ENCODE measurements at regions of chr17 and their contacts with region 1.

Region 1: GRCh38 chr17:31373150-31374093 is 18.1 kb upstream of the RAB11FIP4 start:
- DNase-seq: peak in 7 of 9 donors; percentile 51 to 73 (median 65)
- ATAC-seq: peak; percentile 90
- H3K4me3 ChIP-seq: no peak overlapping the region
- H3K4me3 Mint-ChIP-seq: no peak overlapping the region
- H3K27ac ChIP-seq: no peak overlapping the region
- H3K27ac Mint-ChIP-seq: peak overlapping the region in 3 of 9 donors; percentile 10 to 28 (median 26)
- H3K4me1 ChIP-seq: peaks cover 0 to 4% of the 10 kb centered on the region in 2 donors
- H3K4me1 Mint-ChIP-seq: peaks cover 17 to 30% (median 27%) of the 10 kb centered on the region in 7 donors
- H3K27me3 ChIP-seq: no peaks in the 10 kb centered on the region
- H3K27me3 Mint-ChIP-seq: no peaks in the 10 kb centered on the region

Region 2: DNA sequence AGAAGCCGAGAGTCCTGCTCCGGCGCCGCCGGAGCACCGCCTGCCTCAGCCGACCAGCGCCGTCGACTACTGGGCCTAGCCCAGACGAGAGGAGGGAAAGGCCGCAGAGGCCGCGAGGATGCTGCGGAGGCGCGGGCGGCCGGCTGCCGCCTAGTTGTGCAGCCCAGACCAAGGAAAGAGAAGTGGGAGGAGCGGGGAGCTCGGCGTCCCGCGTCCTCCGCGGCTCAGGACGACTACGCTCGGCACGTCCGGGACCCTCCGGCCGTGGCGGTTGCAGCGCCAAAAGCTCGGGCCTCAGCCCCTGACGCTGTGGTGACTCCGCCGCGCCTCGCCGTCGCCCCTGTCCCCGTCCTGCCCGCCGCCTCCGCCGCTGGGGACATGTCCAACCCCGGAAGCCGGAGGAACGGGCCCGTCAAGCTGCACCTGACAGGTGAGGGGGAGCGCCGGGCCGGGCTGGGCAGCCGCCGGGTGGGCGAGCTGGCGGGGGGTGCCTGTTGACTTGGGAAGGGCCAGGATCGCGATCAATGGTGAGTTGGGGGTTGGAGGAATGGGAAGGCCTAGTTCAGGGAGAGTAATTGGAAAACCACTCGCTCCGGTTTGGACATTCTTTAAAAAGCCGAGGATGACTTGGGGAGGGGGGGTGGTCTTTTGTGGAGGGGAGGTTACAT is 364.9 kb before region 1 on chr17:
- CTCF ChIA-PET with region 1: interaction called, 5 read pairs
- POLR2A ChIA-PET with region 1: no interaction called
- intact Hi-C with region 1: loop called in 1 of 2 experiments (anchors 1 kb)
- DNase-seq: peak; percentile 16 to 60 (median 40)
- ATAC-seq: peak; percentile 77
- H3K4me3 ChIP-seq: peak overlapping the region; percentile 75
- H3K4me3 Mint-ChIP-seq: peak overlapping the region; percentile 86 to 97 (median 92)
- H3K27ac ChIP-seq: peak overlapping the region; percentile 61
- H3K27ac Mint-ChIP-seq: peak overlapping the region; percentile 21 to 94 (median 88)
- H3K4me1 ChIP-seq: peaks cover 0 to 9% of the 10 kb centered on the region in 2 donors
- H3K4me1 Mint-ChIP-seq: peaks cover 8 to 23% (median 18%) of the 10 kb centered on the region in 7 donors
- H3K27me3 ChIP-seq: no peaks in the 10 kb centered on the region
- H3K27me3 Mint-ChIP-seq: peaks cover 0 to 31% (median 0%) of the 10 kb centered on the region in 5 donors

Region 3: DNA sequence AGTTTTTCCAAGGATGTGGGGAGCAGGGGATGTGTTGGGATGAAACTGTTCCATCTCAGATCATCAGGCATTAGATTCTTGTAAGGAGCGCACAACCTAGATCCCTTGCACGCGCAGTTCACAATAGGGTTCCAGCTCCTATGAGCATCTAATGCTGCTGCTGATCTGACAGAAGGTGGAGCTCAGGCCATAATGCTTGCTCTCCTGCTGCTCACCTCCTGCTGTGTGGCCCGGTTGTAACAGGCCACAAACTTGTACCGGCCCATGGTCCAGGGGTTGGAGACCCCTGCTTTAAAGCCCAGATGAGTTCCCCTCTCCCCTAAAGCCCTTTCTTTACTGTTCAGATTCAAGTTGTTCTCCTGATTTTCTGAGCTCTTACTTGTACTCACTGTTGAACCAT is 357.8 kb before region 1 on chr17:
- CTCF ChIA-PET with region 1: interaction called, 5 read pairs
- POLR2A ChIA-PET with region 1: no interaction called
- intact Hi-C with region 1: loop called (anchors 1 to 2 kb)
- DNase-seq: no peak
- ATAC-seq: no peak
- H3K4me3 ChIP-seq: no peak overlapping the region
- H3K4me3 Mint-ChIP-seq: no peak overlapping the region
- H3K27ac ChIP-seq: no peak overlapping the region
- H3K27ac Mint-ChIP-seq: no peak overlapping the region
- H3K4me1 ChIP-seq: no peaks in the 10 kb centered on the region
- H3K4me1 Mint-ChIP-seq: peaks cover 0 to 5% (median 0%) of the 10 kb centered on the region in 7 donors
- H3K27me3 ChIP-seq: no peaks in the 10 kb centered on the region
- H3K27me3 Mint-ChIP-seq: peaks cover 0 to 16% (median 0%) of the 10 kb centered on the region in 5 donors

Region 4: DNA sequence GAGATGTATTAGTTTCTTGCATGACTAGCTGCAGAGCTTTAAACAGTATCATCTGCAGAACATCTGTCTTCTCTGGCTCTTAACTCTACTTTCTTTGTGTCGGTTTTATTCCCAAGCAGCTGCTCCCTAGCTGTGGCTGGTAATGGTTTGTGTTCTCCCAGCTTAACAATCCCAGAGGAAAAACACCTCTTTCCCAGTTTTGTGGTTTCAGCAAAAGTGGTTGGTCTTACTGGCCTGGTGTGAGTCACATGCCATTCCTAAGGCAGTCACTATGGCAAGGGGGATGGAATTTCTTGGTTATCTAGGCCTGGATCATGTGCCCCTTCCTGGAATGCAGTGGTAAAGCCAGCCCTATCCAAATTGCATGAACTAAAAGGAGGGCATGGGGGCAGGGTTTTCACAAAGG is 103.8 kb before region 1 on chr17:
- CTCF ChIA-PET with region 1: interaction called, 16 read pairs
- POLR2A ChIA-PET with region 1: interaction called, 6 read pairs
- intact Hi-C with region 1: loop called (anchors 1 kb)
- DNase-seq: no peak
- ATAC-seq: no peak
- H3K4me3 ChIP-seq: no peak overlapping the region
- H3K4me3 Mint-ChIP-seq: no peak overlapping the region
- H3K27ac ChIP-seq: no peak overlapping the region
- H3K27ac Mint-ChIP-seq: no peak overlapping the region
- H3K4me1 ChIP-seq: no peaks in the 10 kb centered on the region
- H3K4me1 Mint-ChIP-seq: peaks cover 0 to 9% (median 5%) of the 10 kb centered on the region in 7 donors
- H3K27me3 ChIP-seq: no peaks in the 10 kb centered on the region
- H3K27me3 Mint-ChIP-seq: no peaks in the 10 kb centered on the region

Region 5: DNA sequence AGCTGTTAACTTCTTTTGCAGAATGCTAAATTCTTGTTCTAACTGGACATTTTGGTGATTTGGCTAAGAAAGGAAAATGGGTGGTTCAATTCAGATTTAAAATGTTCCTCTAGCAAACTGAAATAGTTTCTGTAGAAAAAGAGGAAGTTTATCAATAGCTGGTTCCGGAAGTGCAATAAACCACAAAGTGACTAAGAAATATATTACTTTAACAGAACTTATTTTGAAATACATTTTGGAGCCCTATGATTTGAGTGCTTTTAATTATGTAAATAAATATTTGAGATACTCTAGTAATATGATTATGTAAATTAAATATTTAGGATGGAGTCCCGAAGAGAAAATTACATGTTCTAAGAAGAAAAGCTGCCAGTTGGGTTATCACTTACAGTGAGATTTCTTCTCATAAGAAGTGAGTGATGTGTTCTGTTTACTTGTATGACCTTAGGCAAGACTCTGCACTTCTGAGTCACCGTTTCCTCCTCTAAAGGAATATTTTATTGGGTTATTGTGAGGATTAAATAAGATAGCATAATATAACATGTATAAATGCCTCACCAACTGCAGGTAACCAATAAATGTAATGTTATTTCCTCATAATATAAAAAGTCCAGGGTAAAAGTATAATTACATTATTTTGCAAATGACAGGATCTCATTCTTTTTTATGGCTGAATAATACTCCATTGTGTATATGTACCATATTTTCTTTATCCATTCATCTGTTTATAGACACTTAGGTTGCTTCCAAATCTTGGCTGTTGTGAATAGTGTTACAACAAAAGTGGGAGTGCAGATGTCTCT is 59.2 kb before region 1 on chr17 and contains the start of gene EVI2B:
- CTCF ChIA-PET with region 1: interaction called, 12 read pairs
- POLR2A ChIA-PET with region 1: interaction called, 10 read pairs
- intact Hi-C with region 1: loop called (anchors 1 to 5 kb)
- DNase-seq: peak in 7 of 9 donors; percentile 51 to 73 (median 69)
- ATAC-seq: peak; percentile 46
- H3K4me3 ChIP-seq: peak within 1 kb of the TSS; percentile 63
- H3K4me3 Mint-ChIP-seq: peak within 1 kb of the TSS; percentile 85 to 98 (median 92)
- H3K27ac ChIP-seq: peak within 1 kb of the TSS; percentile 82
- H3K27ac Mint-ChIP-seq: peak within 1 kb of the TSS; percentile 84 to 98 (median 95)
- H3K4me1 ChIP-seq: peaks cover 27 to 41% of the 10 kb centered on the region in 2 donors
- H3K4me1 Mint-ChIP-seq: peaks cover 31 to 52% (median 44%) of the 10 kb centered on the region in 7 donors
- H3K27me3 ChIP-seq: no peaks in the 10 kb centered on the region
- H3K27me3 Mint-ChIP-seq: peaks cover 0 to 2% (median 0%) of the 10 kb centered on the region in 5 donors
- total RNA-seq, gene EVI2B: 57.8 to 154 (median 134) TPM

Region 6: DNA sequence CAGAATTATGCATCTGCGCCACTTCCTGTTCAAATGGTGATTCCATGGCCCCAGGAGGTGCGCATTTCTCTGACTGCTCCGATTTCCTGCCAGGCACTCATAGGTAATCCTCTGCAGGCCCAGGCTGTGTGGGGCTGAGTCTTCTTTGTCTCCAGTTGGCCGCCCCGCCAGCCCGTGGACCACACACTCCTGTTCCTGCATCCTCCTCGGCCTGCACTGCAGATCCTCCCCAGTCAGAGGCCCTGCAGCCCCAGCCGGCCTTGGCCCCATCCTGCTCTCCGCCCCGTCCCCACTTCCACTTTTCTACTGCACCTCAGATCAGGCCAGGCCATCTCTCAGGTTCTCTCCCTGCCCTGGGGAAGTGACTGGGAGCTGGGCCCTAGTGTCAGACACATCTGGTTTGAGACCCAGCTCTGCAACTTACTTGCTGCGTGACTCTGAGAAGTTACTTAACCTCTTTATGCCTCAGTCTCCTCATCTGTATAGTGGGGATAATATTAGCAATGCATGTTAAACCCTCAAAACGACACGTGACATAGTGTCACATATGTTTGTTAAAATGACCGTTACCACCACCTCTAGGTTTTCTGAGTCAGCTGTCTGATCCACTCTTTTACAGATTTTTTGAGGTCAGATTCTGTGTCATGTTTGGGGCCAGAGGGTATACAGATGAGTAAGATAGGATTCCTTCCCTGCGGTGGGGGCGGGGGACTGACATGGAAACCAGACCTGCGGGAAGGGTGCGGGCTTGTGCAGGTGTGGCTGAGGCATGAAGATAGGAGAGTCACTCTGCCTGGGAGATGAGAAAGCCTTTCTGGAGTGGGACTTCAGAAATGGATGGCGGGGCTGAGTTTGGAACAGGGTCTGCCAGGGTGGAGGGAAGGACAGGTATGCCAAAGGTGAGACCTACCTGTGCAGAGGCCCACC is 30.9 kb after region 1 on chr17:
- CTCF ChIA-PET with region 1: no interaction called
- POLR2A ChIA-PET with region 1: no interaction called
- intact Hi-C with region 1: no loop called
- DNase-seq: no peak
- ATAC-seq: peak; percentile 61
- H3K4me3 ChIP-seq: no peak overlapping the region
- H3K4me3 Mint-ChIP-seq: no peak overlapping the region
- H3K27ac ChIP-seq: no peak overlapping the region
- H3K27ac Mint-ChIP-seq: no peak overlapping the region
- H3K4me1 ChIP-seq: no peaks in the 10 kb centered on the region
- H3K4me1 Mint-ChIP-seq: no peaks in the 10 kb centered on the region
- H3K27me3 ChIP-seq: no peaks in the 10 kb centered on the region
- H3K27me3 Mint-ChIP-seq: peaks cover 0 to 12% (median 0%) of the 10 kb centered on the region in 5 donors